ENCODE measurements at regions of chr22 and their contacts with region 1.

Region 1: DNA sequence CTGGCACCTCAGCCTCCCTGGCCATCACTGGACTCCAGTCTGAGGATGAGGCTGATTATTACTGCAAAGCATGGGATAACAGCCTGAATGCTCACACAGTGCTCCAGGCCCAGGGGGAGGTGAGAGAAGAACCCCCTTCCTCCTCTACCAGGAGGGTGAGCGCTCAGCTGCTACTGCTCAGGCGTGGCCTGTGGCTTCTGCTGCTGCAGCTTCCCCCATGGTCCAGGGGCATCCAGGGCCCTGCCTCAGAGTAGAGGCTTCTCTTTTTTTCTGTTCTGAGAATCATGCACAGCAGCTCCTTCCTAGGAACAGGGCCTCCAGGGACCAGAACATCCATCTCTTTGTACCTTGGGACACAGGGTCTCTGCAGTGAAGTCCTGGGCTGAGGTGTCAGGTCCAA is 83.1 kb downstream of the VPREB1 start:
- DNase-seq: no peak
- H3K4me3 ChIP-seq: no peak overlapping the region
- H3K27ac ChIP-seq: no peak overlapping the region
- H3K4me1 ChIP-seq: peaks cover 0 to 10% (median 3%) of the 10 kb centered on the region in 4 experiments
- H3K27me3 ChIP-seq: peaks cover 0 to 22% (median 4%) of the 10 kb centered on the region in 5 experiments

Region 2: GRCh38 chr22:22348127-22348814 is 20.5 kb after region 1 on chr22:
- CTCF ChIA-PET with region 1: interaction called, 12 read pairs
- POLR2A ChIA-PET with region 1: no interaction called
- DNase-seq: peak in 2 of 3 donors; percentile 33 to 34
- H3K4me3 ChIP-seq: no peak overlapping the region
- H3K27ac ChIP-seq: no peak overlapping the region
- H3K4me1 ChIP-seq: peaks cover 0 to 35% (median 22%) of the 10 kb centered on the region in 4 experiments
- H3K27me3 ChIP-seq: no peaks in the 10 kb centered on the region